ENCODE measurements at regions of chr9 and their contacts with region 1.

Region 1: GRCh38 chr9:130290291-130291181 is 25.0 kb downstream of the HMCN2 start:
- DNase-seq: no peak
- H3K4me3 ChIP-seq: no peak overlapping the region
- H3K4me3 Mint-ChIP-seq: no peak overlapping the region
- H3K27ac Mint-ChIP-seq: no peak overlapping the region
- H3K4me1 ChIP-seq: no peaks in the 10 kb centered on the region
- H3K4me1 Mint-ChIP-seq: no peaks in the 10 kb centered on the region
- H3K27me3 ChIP-seq: 0 out of 2 replicates have a peak, but pooled peaks cover 2% of the 10 kb centered on the region
- H3K27me3 Mint-ChIP-seq: peaks cover 32% of the 10 kb centered on the region
- CTCF ChIP-seq: no peak

Region 2: GRCh38 chr9:130578865-130579737 is 288.6 kb after region 1 on chr9 and contains the start of gene FUBP3:
- CTCF ChIA-PET with region 1: no interaction called
- POLR2A ChIA-PET with region 1: interaction called, 13 read pairs
- intact Hi-C with region 1: no loop called
- DNase-seq: peak; percentile 92 to 93
- H3K4me3 ChIP-seq: peak within 1 kb of the TSS; percentile 97
- H3K4me3 Mint-ChIP-seq: peak within 1 kb of the TSS; percentile 85
- H3K27ac Mint-ChIP-seq: peak within 1 kb of the TSS; percentile 85
- H3K4me1 ChIP-seq: 0 out of 2 replicates have a peak, but pooled peaks cover 5% of the 10 kb centered on the region
- H3K4me1 Mint-ChIP-seq: peaks cover 15% of the 10 kb centered on the region
- H3K27me3 ChIP-seq: no peaks in the 10 kb centered on the region
- H3K27me3 Mint-ChIP-seq: no peaks in the 10 kb centered on the region
- CTCF ChIP-seq: no peak
- total RNA-seq, gene FUBP3: 76.1 and 78.6 TPM in 2 replicates